Transverse colon (tissue), 4 donors: ENCODE measurements at regions of chr9 and their contacts with region 1.

Region 1: GRCh38 chr9:12368569-12368968 is 324.6 kb upstream of the TYRP1 start:
- DNase-seq: no peak
- H3K4me3 ChIP-seq: no peak overlapping the region
- H3K27ac ChIP-seq: no peak overlapping the region
- H3K4me1 ChIP-seq: no peaks in the 10 kb centered on the region
- H3K27me3 ChIP-seq: no peaks in the 10 kb centered on the region
- CTCF ChIP-seq: no peak
- EP300 ChIP-seq: no peak
- POLR2A ChIP-seq: no peak

Region 2: DNA sequence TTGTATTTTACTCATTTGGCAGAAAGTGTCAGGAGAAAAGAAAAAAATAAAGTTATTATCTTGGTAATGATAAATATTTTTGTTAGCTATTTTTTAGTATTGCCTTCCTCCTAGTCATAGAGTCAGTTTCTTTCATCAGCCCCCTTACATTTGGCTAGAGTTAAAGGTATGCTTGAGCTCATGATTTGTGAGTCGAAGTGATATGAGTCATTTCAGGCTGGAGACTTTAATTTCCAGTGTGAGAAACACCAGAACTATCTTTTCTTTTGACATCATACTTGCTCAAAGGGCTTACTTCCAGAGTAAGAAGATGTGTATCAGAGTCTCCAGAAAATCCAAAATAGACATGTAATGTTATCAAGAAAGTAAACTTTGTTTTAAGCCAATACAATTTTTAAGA is 422.0 kb before region 1 on chr9:
- in situ Hi-C with region 1: no loop called
- intact Hi-C with region 1: loop called (anchors 10 kb)
- DNase-seq: no peak
- H3K4me3 ChIP-seq: no peak overlapping the region
- H3K27ac ChIP-seq: no peak overlapping the region
- H3K4me1 ChIP-seq: no peaks in the 10 kb centered on the region
- H3K27me3 ChIP-seq: no peaks in the 10 kb centered on the region
- CTCF ChIP-seq: no peak
- EP300 ChIP-seq: no peak
- POLR2A ChIP-seq: no peak

Region 3: GRCh38 chr9:12091865-12092527 is 276.6 kb before region 1 on chr9:
- in situ Hi-C with region 1: no loop called
- intact Hi-C with region 1: no loop called
- DNase-seq: no peak
- H3K4me3 ChIP-seq: no peak overlapping the region
- H3K27ac ChIP-seq: no peak overlapping the region
- H3K4me1 ChIP-seq: no peaks in the 10 kb centered on the region
- H3K27me3 ChIP-seq: no peaks in the 10 kb centered on the region
- CTCF ChIP-seq: no peak
- EP300 ChIP-seq: no peak
- POLR2A ChIP-seq: no peak

Region 4: DNA sequence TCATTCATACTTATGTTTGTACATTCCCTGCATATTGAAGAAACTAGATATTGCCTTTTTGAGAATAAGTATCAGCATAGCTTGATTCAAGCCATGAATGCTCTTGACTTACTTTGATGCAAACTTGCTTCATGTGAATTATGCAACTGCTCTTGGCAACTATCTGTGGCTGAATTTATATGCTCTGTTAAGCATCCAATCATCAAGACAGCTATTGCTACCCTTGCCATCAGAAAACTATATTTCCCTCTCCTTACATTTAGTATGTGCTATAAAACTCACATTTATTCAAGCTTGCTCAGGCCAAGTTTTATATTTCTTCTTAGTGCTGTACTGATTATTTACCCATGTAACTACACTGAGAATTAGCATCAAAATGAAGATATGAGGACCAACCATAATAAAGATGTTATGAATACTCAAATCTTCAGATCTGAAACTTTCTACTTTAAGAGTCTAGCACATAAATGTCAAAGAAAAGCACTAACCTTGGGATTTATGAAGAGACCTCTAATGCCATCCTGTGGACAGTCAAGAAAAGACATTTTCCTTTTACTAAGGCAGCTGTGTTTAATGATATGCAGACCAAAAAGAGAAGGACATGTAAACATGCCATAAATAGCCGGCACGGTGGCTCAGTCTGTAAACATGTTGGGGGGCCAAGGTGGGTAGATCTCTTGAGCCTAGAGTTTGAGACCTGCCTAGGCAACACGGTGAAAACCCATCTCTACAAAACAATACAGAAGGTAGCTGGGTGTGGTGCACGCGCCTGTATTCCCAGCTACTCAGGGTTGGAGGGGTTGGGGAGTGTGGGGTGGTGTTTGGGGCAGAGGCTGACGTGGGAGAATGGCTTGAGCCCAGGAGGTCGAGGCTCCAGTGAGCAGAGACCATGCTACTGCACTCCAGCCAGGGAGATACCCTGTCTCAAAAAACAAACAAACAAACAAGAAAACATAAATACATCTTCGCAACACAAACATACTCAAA is 57.6 kb after region 1 on chr9:
- in situ Hi-C with region 1: no loop called
- intact Hi-C with region 1: no loop called
- DNase-seq: no peak
- H3K4me3 ChIP-seq: no peak overlapping the region
- H3K27ac ChIP-seq: no peak overlapping the region
- H3K4me1 ChIP-seq: no peaks in the 10 kb centered on the region
- H3K27me3 ChIP-seq: no peaks in the 10 kb centered on the region
- CTCF ChIP-seq: no peak
- EP300 ChIP-seq: no peak
- POLR2A ChIP-seq: no peak

Region 5: DNA sequence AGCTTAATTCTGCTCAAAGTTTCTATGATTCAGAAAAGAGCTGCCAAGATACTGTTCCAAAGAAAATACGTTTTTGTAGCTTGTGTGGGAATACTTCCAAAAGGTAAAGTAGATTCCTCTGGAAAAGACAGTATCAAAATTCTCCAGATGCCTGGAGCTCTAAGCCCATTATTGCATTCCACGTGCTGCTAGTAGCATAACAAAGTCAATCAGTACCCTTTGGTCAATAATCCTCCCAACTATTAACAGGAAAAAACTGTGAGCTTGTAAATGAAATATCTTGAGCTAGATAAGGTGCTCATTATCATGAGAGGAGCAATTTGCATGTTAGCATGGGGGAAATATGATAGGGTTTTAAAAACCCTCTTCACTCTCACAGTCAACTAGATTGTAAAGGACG is 95.1 kb after region 1 on chr9:
- in situ Hi-C with region 1: no loop called
- intact Hi-C with region 1: no loop called
- DNase-seq: no peak
- H3K4me3 ChIP-seq: no peak overlapping the region
- H3K27ac ChIP-seq: no peak overlapping the region
- H3K4me1 ChIP-seq: no peaks in the 10 kb centered on the region
- H3K27me3 ChIP-seq: no peaks in the 10 kb centered on the region
- CTCF ChIP-seq: no peak
- EP300 ChIP-seq: no peak
- POLR2A ChIP-seq: no peak

Region 6: GRCh38 chr9:12819436-12820185 is 451.0 kb after region 1 on chr9:
- in situ Hi-C with region 1: no loop called
- intact Hi-C with region 1: no loop called
- DNase-seq: peak; percentile 19
- H3K4me3 ChIP-seq: no peak overlapping the region
- H3K27ac ChIP-seq: peak overlapping the region; percentile 79 to 84 (median 81)
- H3K4me1 ChIP-seq: peaks cover 15 to 48% (median 41%) of the 10 kb centered on the region in 4 donors
- H3K27me3 ChIP-seq: no peaks in the 10 kb centered on the region
- CTCF ChIP-seq: peak; percentile 28 to 51 (median 49)
- EP300 ChIP-seq: no peak
- POLR2A ChIP-seq: no peak